ENCODE measurements at regions of chr21 and their contacts with region 1.

Region 1: GRCh38 chr21:36028127-36029069 is 31.9 kb downstream of the SETD4 start:
- DNase-seq: peak; percentile 89
- ATAC-seq: peak; percentile 97
- H3K4me3 ChIP-seq: no peak overlapping the region
- H3K27ac ChIP-seq: no peak overlapping the region
- H3K4me1 ChIP-seq: no peaks in the 10 kb centered on the region
- H3K27me3 ChIP-seq: no peaks in the 10 kb centered on the region
- CTCF ChIP-seq: peak; percentile 97

Region 2: GRCh38 chr21:34693192-34693810 is 1335.1 kb before region 1 on chr21:
- CTCF ChIA-PET with region 1: no interaction called
- POLR2A ChIA-PET with region 1: no interaction called
- intact Hi-C with region 1: loop called (anchors 1 kb)
- DNase-seq: peak; percentile 83
- ATAC-seq: peak; percentile 65
- H3K4me3 ChIP-seq: no peak overlapping the region
- H3K27ac ChIP-seq: no peak overlapping the region
- H3K4me1 ChIP-seq: peaks cover 38% of the 10 kb centered on the region
- H3K27me3 ChIP-seq: no peaks in the 10 kb centered on the region
- CTCF ChIP-seq: peak; percentile 93

Region 3: DNA sequence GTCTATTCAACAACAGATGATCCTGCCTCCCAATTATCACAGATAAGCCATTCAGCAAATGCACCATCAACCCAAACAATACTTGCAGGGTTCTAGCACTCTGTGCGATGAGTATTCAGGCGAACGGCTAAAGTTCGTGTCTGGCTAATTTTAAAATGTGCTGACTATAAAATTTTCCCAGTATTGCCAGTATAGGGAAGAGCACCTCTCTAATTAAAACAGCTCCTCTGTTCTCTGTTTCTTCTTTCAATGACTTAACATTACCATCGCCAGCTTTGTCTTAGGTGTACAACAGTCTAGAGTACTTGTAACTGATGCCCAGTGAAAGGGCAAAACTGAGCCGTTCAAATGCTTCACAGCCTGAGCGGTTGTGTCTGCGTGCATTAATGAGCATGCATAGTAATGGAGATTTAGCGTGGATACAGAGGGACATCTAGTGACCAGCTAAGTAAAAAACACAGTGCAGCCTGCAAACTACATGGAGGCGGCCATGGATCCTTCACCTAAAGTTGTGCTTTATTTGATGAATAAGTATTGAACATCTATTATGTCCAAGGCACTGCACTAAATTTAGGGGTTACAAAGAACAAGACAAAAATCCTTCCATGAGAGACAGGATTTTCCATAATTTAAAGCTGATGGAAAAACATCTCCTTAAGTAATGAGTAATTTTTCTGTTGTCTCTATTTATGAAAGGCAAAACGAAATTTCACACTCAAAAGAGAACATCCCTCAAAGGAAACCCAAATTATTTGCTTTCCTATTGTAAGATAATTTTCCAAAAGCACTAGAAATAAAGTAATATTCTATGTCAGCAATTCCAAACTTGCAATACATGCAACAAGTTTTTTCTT is 88.1 kb before region 1 on chr21:
- CTCF ChIA-PET with region 1: no interaction called
- POLR2A ChIA-PET with region 1: no interaction called
- intact Hi-C with region 1: loop called (anchors 1 kb)
- DNase-seq: peak; percentile 86
- ATAC-seq: peak; percentile 99
- H3K4me3 ChIP-seq: no peak overlapping the region
- H3K27ac ChIP-seq: no peak overlapping the region
- H3K4me1 ChIP-seq: peaks cover 4% of the 10 kb centered on the region
- H3K27me3 ChIP-seq: no peaks in the 10 kb centered on the region
- CTCF ChIP-seq: peak; percentile 91

Region 4: GRCh38 chr21:36015045-36015444 is 13.4 kb before region 1 on chr21:
- CTCF ChIA-PET with region 1: no interaction called
- POLR2A ChIA-PET with region 1: no interaction called
- intact Hi-C with region 1: no loop called
- DNase-seq: no peak
- ATAC-seq: no peak
- H3K4me3 ChIP-seq: no peak overlapping the region
- H3K27ac ChIP-seq: no peak overlapping the region
- H3K4me1 ChIP-seq: no peaks in the 10 kb centered on the region
- H3K27me3 ChIP-seq: no peaks in the 10 kb centered on the region
- CTCF ChIP-seq: no peak

Region 5: GRCh38 chr21:36069713-36070573 is 41.5 kb after region 1 on chr21 and contains the start of gene CBR1:
- CTCF ChIA-PET with region 1: no interaction called
- POLR2A ChIA-PET with region 1: no interaction called
- intact Hi-C with region 1: no loop called
- DNase-seq: peak; percentile 93
- ATAC-seq: peak; percentile 91
- H3K4me3 ChIP-seq: peak within 1 kb of the TSS; percentile 81
- H3K27ac ChIP-seq: peak within 1 kb of the TSS; percentile 73
- H3K4me1 ChIP-seq: peaks cover 29% of the 10 kb centered on the region
- H3K27me3 ChIP-seq: no peaks in the 10 kb centered on the region
- CTCF ChIP-seq: no peak
- total RNA-seq, gene CBR1: 297 and 343 TPM in 2 replicates

Region 6: GRCh38 chr21:36209626-36210171 is 181.3 kb after region 1 on chr21:
- CTCF ChIA-PET with region 1: no interaction called
- POLR2A ChIA-PET with region 1: no interaction called
- intact Hi-C with region 1: no loop called
- DNase-seq: peak; percentile 83
- ATAC-seq: peak; percentile 37
- H3K4me3 ChIP-seq: peak overlapping the region; percentile 31; the same call in 1 of the 2 replicates
- H3K27ac ChIP-seq: peak overlapping the region; percentile 83
- H3K4me1 ChIP-seq: peaks cover 67% of the 10 kb centered on the region
- H3K27me3 ChIP-seq: no peaks in the 10 kb centered on the region
- CTCF ChIP-seq: peak; percentile 94